ENCODE measurements at regions of chr12 and their contacts with region 1.

Region 1: DNA sequence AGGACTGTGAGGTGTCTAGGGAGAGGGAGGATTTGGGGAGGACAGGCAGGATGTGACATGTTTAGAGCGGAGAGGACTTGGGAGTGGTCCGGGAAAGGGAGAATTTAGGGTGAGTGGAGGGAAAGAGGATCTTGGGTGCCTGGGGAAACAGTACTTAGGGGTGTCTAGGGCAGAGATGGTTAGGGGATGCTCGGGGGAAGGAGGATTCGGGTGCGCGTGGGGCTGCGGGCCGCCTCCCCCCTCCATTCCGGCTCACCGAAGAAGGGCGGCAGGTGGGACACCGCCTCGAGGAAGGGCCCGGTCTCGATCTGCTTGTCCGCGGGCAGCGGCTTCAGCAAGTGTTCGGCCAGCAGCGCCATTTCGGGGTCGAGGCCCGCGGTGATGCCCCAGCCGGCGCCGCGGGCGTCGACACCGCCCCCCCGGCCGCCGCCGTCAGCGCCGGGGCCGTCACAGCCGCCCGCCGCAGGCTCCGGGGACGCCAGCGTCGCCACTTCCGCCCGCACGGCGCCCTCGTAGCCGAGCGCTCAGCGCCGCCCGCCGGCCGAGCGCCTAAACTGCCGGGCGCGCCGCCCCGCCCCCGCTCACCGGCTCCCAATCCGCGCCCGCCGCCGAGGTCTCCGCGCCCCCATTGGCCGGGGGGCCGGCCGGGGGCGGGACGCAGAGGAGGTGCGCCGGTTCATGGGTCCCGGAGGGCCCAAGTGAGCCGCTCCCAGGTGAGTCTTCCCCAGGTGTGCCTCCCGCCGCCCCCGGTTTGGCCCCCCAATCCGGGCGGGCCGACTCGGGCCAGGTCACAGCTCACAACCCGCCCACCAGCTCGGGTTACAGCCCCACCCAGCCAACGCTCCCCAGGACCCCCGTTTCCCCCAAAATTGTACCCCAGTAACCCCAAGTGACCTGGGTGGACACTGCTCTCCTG is at the start of gene GLTP:
- DNase-seq: peak; percentile 94
- ATAC-seq: peak; percentile 98
- H3K4me3 Mint-ChIP-seq: peak within 1 kb of the TSS; percentile 90
- H3K27ac Mint-ChIP-seq: peak within 1 kb of the TSS; percentile 83
- H3K4me1 Mint-ChIP-seq: peaks cover 54% of the 10 kb centered on the region
- H3K27me3 Mint-ChIP-seq: no peaks in the 10 kb centered on the region
- CTCF ChIP-seq: no peak
- total RNA-seq, gene GLTP: 26.5 and 30.0 TPM in 2 replicates

Region 2: DNA sequence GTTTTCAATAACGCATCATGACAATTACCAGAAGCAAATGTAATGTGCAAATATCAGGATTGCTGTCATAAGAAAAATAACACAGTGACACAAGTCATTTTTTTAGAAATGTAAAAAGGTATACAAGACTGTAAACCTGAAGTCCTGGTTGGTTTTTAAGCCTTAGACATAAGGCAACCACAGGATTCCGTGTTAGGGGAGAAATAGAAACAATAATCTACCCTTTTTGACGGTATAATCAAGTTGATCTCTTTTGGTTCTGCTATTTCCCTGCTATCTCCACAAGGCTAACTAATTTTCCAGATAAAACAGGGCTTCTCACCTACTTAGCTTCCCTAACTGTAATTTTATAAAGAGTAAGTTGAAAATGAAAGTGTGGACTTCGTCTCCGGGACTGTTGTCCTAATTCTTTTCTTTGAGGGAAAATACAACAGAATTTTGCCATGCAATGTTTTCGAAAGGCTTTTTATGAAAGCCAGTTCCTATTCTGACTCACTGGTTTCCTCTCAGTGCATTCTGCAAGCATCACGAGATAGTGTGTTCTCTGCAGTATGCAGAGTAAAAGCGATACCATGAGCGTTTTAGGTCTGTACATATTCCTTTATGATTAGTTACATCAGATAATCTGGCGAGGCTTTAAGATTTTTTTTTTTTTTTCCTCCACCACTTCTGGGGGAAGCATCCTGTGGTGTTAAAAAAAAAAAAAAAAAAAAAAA is 522.0 kb before region 1 on chr12:
- CTCF ChIA-PET with region 1: no interaction called
- POLR2A ChIA-PET with region 1: no interaction called
- intact Hi-C with region 1: no loop called
- DNase-seq: no peak
- ATAC-seq: no peak
- H3K4me3 Mint-ChIP-seq: no peak overlapping the region
- H3K27ac Mint-ChIP-seq: no peak overlapping the region
- H3K4me1 Mint-ChIP-seq: no peaks in the 10 kb centered on the region
- H3K27me3 Mint-ChIP-seq: peaks cover 21% of the 10 kb centered on the region
- CTCF ChIP-seq: no peak

Region 3: DNA sequence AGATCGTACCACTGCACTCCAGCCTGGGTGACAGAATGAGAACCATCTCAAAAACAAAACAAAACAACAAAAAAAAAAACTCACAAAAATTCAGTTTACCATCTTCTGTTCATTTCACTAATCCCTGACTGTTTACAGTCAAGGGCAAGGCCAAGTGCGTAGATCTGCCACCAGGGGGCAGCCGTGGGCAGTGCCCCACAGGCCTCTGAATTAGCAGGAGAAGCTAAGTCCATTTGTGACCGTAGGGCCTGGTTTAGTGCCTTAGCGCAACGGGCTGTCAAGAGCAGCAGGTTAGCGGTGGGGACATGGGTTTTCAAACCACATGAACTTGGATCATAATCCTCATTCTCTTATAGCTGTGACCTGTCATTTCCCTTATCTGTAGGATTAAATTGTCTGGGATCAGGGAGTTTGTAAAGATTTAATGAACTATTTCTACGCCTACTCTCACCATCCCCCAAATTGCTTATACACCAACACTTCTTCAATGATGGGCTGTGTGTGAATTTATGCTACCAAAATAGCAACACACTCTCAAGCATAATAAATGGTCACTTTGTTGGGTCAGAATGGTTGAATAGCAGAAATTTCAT is 452.1 kb before region 1 on chr12:
- CTCF ChIA-PET with region 1: no interaction called
- POLR2A ChIA-PET with region 1: no interaction called
- intact Hi-C with region 1: loop called (anchors 2 kb)
- DNase-seq: peak; percentile 52
- ATAC-seq: peak; percentile 85
- H3K4me3 Mint-ChIP-seq: no peak overlapping the region
- H3K27ac Mint-ChIP-seq: no peak overlapping the region
- H3K4me1 Mint-ChIP-seq: peaks cover 6% of the 10 kb centered on the region
- H3K27me3 Mint-ChIP-seq: peaks cover 9% of the 10 kb centered on the region
- CTCF ChIP-seq: peak; percentile 79

Region 4: GRCh38 chr12:109573029-109573913 is 307.0 kb before region 1 on chr12 and contains the starts of genes MMAB and MVK:
- CTCF ChIA-PET with region 1: no interaction called
- POLR2A ChIA-PET with region 1: no interaction called
- intact Hi-C with region 1: loop called (anchors 5 kb)
- DNase-seq: peak; percentile 92
- ATAC-seq: peak; percentile 94
- H3K4me3 Mint-ChIP-seq: peak within 1 kb of the TSS; percentile 93
- H3K27ac Mint-ChIP-seq: peak within 1 kb of the TSS; percentile 90
- H3K4me1 Mint-ChIP-seq: peaks cover 25% of the 10 kb centered on the region
- H3K27me3 Mint-ChIP-seq: no peaks in the 10 kb centered on the region
- CTCF ChIP-seq: no peak
- total RNA-seq, gene MMAB: 62.8 and 63.3 TPM in 2 replicates
- total RNA-seq, gene MVK: 28.5 and 30.3 TPM in 2 replicates

Region 5: GRCh38 chr12:109713187-109713984 is 166.9 kb before region 1 on chr12 and contains the start of gene FAM222A:
- CTCF ChIA-PET with region 1: no interaction called
- POLR2A ChIA-PET with region 1: no interaction called
- intact Hi-C with region 1: loop called (anchors 1 kb)
- DNase-seq: peak; percentile 96
- ATAC-seq: peak; percentile 85
- H3K4me3 Mint-ChIP-seq: peak within 1 kb of the TSS; percentile 80
- H3K27ac Mint-ChIP-seq: no peak within 1 kb of the TSS
- H3K4me1 Mint-ChIP-seq: peaks cover 12% of the 10 kb centered on the region
- H3K27me3 Mint-ChIP-seq: peaks cover 23% of the 10 kb centered on the region
- CTCF ChIP-seq: no peak
- total RNA-seq, gene FAM222A: 0.73 and 1.6 TPM in 2 replicates

Region 6: DNA sequence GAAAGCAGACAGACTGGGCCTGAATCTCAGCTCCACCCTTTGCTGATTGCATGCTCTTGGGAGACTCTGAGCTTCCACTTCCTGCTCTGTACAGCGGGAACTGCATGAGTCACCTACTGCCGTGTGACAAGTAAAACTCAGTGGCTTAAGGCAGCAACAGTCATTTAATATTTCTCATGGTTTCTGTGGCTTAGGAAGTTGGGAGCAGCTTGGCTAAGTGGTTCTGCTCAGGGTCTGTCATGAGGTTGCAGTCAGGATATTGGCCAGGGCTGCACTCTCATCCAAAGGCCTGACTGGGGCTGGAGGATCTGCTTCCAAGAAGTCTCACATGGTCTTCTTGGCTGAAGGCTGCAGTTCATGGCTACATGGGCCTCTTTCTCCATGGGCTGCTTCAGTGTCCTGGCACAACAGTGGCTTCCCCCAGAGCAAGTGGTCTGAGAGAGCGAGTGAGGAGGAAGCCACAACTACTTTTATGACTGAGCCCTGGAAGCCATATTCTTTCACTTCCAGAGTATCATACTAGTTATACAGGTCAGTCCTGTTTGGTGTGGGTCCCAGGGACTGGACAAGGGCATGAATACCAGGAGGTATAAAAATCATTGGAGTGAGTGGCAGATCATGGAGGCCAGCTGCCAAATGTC is 117.0 kb before region 1 on chr12:
- CTCF ChIA-PET with region 1: no interaction called
- POLR2A ChIA-PET with region 1: no interaction called
- intact Hi-C with region 1: no loop called
- DNase-seq: peak; percentile 0
- ATAC-seq: no peak
- H3K4me3 Mint-ChIP-seq: no peak overlapping the region
- H3K27ac Mint-ChIP-seq: no peak overlapping the region
- H3K4me1 Mint-ChIP-seq: no peaks in the 10 kb centered on the region
- H3K27me3 Mint-ChIP-seq: no peaks in the 10 kb centered on the region
- CTCF ChIP-seq: no peak

Region 7: DNA sequence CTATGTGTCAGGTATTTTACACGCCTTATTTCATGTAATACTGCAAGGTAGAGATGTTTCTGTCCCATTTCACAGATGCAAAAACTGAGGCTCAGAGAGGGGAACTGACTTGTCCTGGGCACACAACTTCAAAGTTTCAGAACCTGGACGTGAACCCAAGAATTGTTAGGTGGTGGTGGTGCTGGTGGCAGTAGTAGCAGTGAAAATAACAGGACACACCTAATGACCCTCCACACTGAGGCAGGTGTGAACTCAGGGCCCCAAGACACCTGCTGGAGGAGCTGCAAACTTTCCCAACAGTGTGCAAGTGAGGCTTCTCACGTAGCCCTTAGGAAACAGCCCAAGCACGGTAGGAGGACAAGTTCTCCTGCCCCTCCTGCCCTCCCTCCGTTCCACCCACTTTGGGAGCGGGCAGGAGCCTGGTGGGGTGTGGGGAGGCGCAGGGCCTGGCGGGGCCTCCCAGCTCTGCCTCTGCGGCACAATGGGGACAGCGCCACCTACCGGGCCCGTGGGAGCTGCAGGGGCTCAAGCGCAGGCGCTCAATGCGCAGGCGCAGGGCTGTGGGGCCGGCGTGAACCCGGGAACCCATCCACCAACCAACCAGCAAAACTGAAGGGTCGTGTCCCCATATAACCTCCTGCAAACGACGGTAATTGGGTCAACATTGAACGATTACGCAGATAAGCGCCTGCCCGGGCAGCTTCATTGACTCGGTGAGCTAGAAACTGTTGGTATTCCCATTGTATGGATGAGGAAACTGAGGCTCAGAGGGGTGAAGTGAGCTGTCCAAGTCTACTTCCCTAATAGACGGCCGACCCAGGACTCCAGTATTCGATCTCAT is 35.1 kb before region 1 on chr12:
- CTCF ChIA-PET with region 1: interaction called, 3 read pairs
- POLR2A ChIA-PET with region 1: no interaction called
- intact Hi-C with region 1: loop called (anchors 1 kb)
- DNase-seq: peak; percentile 90
- ATAC-seq: peak; percentile 99
- H3K4me3 Mint-ChIP-seq: no peak overlapping the region
- H3K27ac Mint-ChIP-seq: peak overlapping the region; percentile 9
- H3K4me1 Mint-ChIP-seq: peaks cover 6% of the 10 kb centered on the region
- H3K27me3 Mint-ChIP-seq: no peaks in the 10 kb centered on the region
- CTCF ChIP-seq: peak; percentile 69

Region 8: DNA sequence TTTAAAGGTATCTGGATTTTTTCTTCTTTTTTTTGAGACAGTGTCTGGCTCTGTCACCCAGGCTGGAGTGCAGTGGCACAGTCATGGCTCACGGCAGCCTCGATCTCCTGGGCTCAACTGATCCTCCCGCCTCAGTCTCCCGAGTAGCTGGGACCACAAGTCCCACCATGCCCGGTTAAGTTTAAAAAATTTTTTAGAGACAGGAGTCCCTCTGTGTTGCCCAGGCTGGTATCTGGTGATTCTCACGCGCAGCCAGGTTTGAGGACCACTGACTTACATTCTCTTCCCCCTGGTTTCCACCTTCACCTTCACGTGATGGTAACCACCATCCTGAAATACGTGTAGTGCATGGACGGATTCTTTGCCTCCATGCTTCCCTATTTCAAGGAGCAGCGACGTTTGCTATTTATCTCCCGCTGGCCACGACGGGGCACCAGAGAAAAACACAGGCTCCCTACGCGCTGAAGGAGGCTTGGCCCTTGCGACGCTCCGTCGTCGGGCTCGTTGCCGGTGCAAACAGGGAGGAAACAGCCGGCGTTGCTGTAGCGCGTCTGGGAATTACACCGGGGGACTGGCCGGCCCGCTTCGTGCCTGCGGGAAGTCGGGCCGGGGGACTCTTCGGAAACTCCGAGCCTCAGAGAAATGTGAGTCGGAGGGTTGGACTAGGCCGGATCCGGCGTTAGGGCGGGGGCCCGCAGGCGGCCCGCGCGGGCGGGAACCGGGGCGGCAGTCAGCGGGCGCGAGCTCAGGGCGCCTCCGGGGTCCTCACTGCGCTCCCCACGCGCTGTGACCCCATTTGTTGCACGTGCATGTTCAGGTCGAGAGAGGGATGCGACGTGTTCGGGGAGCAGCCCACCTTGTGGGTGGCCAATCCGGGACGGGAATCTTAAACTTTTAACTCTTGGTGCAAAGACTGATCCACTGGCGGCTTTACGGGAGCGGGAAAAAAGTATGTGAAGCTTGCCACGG is 19.8 kb after region 1 on chr12 and contains the start of gene TCHP:
- CTCF ChIA-PET with region 1: no interaction called
- POLR2A ChIA-PET with region 1: interaction called, 4 read pairs
- intact Hi-C with region 1: loop called (anchors 1 kb)
- DNase-seq: peak; percentile 67
- ATAC-seq: peak; percentile 93
- H3K4me3 Mint-ChIP-seq: peak within 1 kb of the TSS; percentile 99
- H3K27ac Mint-ChIP-seq: peak within 1 kb of the TSS; percentile 96
- H3K4me1 Mint-ChIP-seq: peaks cover 29% of the 10 kb centered on the region
- H3K27me3 Mint-ChIP-seq: no peaks in the 10 kb centered on the region
- CTCF ChIP-seq: no peak
- total RNA-seq, gene TCHP: 26.0 and 28.3 TPM in 2 replicates

Region 9: GRCh38 chr12:111599459-111600204 is 1719.4 kb after region 1 on chr12:
- CTCF ChIA-PET with region 1: no interaction called
- POLR2A ChIA-PET with region 1: no interaction called
- intact Hi-C with region 1: loop called (anchors 5 kb)
- DNase-seq: peak; percentile 93
- ATAC-seq: peak; percentile 81
- H3K4me3 Mint-ChIP-seq: peak overlapping the region; percentile 86
- H3K27ac Mint-ChIP-seq: peak overlapping the region; percentile 88
- H3K4me1 Mint-ChIP-seq: peaks cover 29% of the 10 kb centered on the region
- H3K27me3 Mint-ChIP-seq: no peaks in the 10 kb centered on the region
- CTCF ChIP-seq: no peak